HepG2 (cell line): ENCODE measurements at regions of chr3 and their contacts with region 1.

Region 1: GRCh38 chr3:120506828-120507774 is 56.3 kb upstream of the FSTL1 start:
- DNase-seq: peak; percentile 32
- ATAC-seq: peak; percentile 71
- H3K4me3 ChIP-seq: peak overlapping the region in 1 of 3 experiments; percentile 12; a peak in 1 of 6 replicates
- H3K27ac ChIP-seq: no peak overlapping the region
- H3K4me1 ChIP-seq: peaks cover 8% of the 10 kb centered on the region
- H3K27me3 ChIP-seq: peaks cover 0 to 8% of the 10 kb centered on the region in 2 experiments; a peak in 2 of 5 replicates
- CTCF ChIP-seq: peak; percentile 58
- EP300 ChIP-seq: no peak
- POLR2A ChIP-seq: no peak
- RAD21 ChIP-seq: no peak

Region 2: GRCh38 chr3:120245386-120245785 is 261.7 kb before region 1 on chr3:
- CTCF ChIA-PET with region 1: interaction called, 14 read pairs
- POLR2A ChIA-PET with region 1: no interaction called
- in situ Hi-C with region 1: no loop called
- intact Hi-C with region 1: loop called (anchors 1 kb)
- DNase-seq: no peak
- ATAC-seq: no peak
- H3K4me3 ChIP-seq: no peak overlapping the region
- H3K27ac ChIP-seq: no peak overlapping the region
- H3K4me1 ChIP-seq: no peaks in the 10 kb centered on the region
- H3K27me3 ChIP-seq: no peaks in the 10 kb centered on the region
- CTCF ChIP-seq: no peak
- EP300 ChIP-seq: no peak
- POLR2A ChIP-seq: no peak
- RAD21 ChIP-seq: no peak